PC-9 (cell line): ENCODE measurements at regions of chr12 and their contacts with region 1.

Region 1: DNA sequence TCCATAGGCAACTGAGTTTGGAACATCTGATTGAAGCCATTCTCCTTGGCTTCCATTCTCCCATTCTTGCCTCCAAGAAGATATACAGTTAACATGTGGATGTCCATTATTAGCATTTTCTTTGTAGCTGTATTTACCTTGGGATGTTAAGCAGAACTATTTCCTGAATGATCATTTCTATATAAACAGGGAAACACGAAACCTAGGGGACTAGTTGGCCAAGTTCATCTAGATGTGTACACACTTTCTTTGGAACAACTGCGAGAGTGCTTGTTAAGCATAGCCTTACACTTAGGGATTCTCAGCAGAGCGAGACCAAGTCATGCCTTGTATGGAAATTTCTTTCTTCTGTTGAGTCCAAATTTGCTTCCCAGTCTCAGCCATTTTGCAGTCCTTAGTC is 42.1 kb downstream of the DRAM1 start:
- DNase-seq: no peak
- H3K4me3 ChIP-seq: no peak overlapping the region
- H3K27ac ChIP-seq: no peak overlapping the region
- H3K4me1 ChIP-seq: no peaks in the 10 kb centered on the region
- H3K27me3 ChIP-seq: no peaks in the 10 kb centered on the region
- CTCF ChIP-seq: no peak

Region 2: GRCh38 chr12:102811110-102811737 is 891.8 kb after region 1 on chr12:
- CTCF ChIA-PET with region 1: no interaction called
- POLR2A ChIA-PET with region 1: no interaction called
- intact Hi-C with region 1: loop called (anchors 1 kb)
- DNase-seq: peak in 1 of 2 experiments; percentile 33
- H3K4me3 ChIP-seq: no peak overlapping the region
- H3K27ac ChIP-seq: no peak overlapping the region
- H3K4me1 ChIP-seq: no peaks in the 10 kb centered on the region
- H3K27me3 ChIP-seq: no peaks in the 10 kb centered on the region
- CTCF ChIP-seq: peak; percentile 66